ENCODE measurements at regions of chr19 and their contacts with region 1.

Region 1: GRCh38 chr19:16247353-16248182 is 49.9 kb downstream of the AP1M1 start:
- DNase-seq: peak; percentile 69 to 99
- H3K4me3 ChIP-seq: no peak overlapping the region
- H3K27ac ChIP-seq: no peak overlapping the region
- H3K4me1 ChIP-seq: no peaks in the 10 kb centered on the region
- H3K27me3 ChIP-seq: no peaks in the 10 kb centered on the region
- CTCF ChIP-seq: peak; percentile 97 to 98 (median 98)
- EP300 ChIP-seq: no peak
- POLR2A ChIP-seq: no peak
- RAD21 ChIP-seq: peak; percentile 98 to 99

Region 2: DNA sequence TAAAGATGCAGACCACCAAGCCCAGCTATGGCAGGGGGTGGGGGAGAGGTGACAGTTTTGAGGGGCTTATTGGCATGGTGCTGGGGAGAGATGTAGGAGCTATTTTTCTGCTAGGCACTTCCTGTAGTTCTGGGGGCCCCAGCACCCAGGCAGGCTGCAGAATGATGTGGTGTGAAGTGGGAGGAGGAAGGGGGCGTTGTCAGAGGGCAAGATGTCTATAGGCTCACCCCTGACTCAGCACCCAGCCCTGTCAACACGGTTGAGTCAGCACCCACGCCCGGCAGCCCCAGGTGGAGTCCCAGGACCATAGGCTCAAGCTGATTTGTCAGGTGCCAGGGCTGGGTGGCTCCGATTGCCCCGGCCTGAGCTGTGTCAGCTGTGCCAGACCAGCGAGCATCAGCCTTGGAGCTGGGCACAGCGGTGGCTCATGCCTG is 82.8 kb after region 1 on chr19:
- CTCF ChIA-PET with region 1: interaction called, 41 read pairs
- POLR2A ChIA-PET with region 1: no interaction called
- DNase-seq: no peak
- H3K4me3 ChIP-seq: no peak overlapping the region
- H3K27ac ChIP-seq: no peak overlapping the region
- H3K4me1 ChIP-seq: peaks cover 0 to 2% (median 0%) of the 10 kb centered on the region in 4 experiments; a peak in 2 of 7 replicates
- H3K27me3 ChIP-seq: peaks cover 17 to 42% (median 38%) of the 10 kb centered on the region in 4 experiments
- CTCF ChIP-seq: no peak
- EP300 ChIP-seq: no peak
- POLR2A ChIP-seq: no peak
- RAD21 ChIP-seq: no peak

Region 3: DNA sequence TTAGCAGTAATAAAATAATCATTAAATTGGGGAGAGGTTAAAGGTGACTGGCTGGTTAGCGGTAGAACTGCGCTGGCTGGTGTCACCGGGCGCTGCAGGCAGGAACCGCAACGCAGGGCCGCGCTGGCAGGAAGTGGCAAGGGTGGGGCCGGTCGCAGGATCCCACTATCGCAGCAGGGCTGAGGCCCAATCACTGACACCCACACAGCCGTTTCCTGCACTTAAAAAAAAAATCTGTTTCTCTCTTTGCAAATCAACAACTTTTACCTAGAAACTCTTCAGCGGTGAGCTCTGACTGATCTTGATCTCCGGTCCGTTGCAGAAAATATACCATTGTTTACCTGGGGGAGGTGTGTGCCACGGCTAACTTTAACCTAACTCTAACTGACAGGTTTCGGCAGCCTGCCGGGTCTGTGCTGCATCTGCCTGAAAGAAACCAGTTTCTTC is 124.0 kb after region 1 on chr19:
- CTCF ChIA-PET with region 1: interaction called, 38 read pairs
- POLR2A ChIA-PET with region 1: no interaction called
- DNase-seq: no peak
- H3K4me3 ChIP-seq: no peak overlapping the region
- H3K27ac ChIP-seq: no peak overlapping the region
- H3K4me1 ChIP-seq: peaks cover 0 to 4% (median 2%) of the 10 kb centered on the region in 4 experiments; a peak in 2 of 7 replicates
- H3K27me3 ChIP-seq: no peaks in the 10 kb centered on the region
- CTCF ChIP-seq: no peak
- EP300 ChIP-seq: no peak
- POLR2A ChIP-seq: no peak
- RAD21 ChIP-seq: no peak

Region 4: GRCh38 chr19:16376649-16377048 is 129.1 kb after region 1 on chr19:
- CTCF ChIA-PET with region 1: interaction called, 66 read pairs
- POLR2A ChIA-PET with region 1: no interaction called
- DNase-seq: peak in 1 of 2 experiments; percentile 86
- H3K4me3 ChIP-seq: no peak overlapping the region
- H3K27ac ChIP-seq: no peak overlapping the region
- H3K4me1 ChIP-seq: no peaks in the 10 kb centered on the region
- H3K27me3 ChIP-seq: no peaks in the 10 kb centered on the region
- CTCF ChIP-seq: peak; percentile 70 to 89 (median 79)
- EP300 ChIP-seq: no peak
- POLR2A ChIP-seq: no peak
- RAD21 ChIP-seq: peak; percentile 41 to 52

Region 5: DNA sequence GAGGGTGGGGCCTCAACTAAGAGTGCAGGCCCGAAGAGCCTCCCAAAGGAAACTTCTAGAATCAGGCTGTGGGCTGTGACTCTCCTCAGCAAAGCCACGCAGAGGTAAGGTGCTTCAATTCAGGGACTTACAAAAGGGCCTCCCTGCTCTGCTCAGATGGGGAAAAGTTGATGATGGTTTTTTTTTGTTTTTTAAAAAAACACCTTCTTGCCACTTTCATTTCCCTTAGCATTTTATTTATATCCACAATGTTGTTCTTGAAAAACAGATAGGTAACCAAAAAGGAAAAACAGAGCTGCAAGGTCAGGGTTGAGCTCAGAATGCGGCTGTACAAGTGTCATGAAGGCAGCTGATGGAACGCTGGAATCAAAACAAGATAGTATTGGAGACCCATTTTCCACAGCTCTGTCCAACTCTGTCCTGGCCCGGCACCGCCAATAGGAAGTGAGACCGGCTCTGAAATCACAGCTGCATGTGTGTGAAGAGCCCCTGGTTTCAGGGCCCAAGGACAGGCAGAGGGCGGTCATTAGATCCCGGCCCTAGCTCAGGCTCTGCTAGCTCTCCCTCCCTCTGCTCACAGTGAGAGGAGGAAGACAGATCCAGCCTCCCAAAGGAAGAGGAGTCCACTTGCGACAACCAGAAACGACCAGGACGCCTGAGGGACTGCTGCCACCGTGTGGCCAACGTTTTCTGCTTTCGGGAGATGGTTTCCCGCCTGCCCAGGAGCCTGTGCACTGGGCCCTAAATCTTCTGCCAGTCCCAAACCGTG is 135.4 kb after region 1 on chr19:
- CTCF ChIA-PET with region 1: interaction called, 66 read pairs
- POLR2A ChIA-PET with region 1: no interaction called
- DNase-seq: peak; percentile 61 to 91
- H3K4me3 ChIP-seq: no peak overlapping the region
- H3K27ac ChIP-seq: no peak overlapping the region
- H3K4me1 ChIP-seq: no peaks in the 10 kb centered on the region
- H3K27me3 ChIP-seq: no peaks in the 10 kb centered on the region
- CTCF ChIP-seq: peak; percentile 87 to 93 (median 92)
- EP300 ChIP-seq: no peak
- POLR2A ChIP-seq: no peak
- RAD21 ChIP-seq: peak; percentile 97

Region 6: DNA sequence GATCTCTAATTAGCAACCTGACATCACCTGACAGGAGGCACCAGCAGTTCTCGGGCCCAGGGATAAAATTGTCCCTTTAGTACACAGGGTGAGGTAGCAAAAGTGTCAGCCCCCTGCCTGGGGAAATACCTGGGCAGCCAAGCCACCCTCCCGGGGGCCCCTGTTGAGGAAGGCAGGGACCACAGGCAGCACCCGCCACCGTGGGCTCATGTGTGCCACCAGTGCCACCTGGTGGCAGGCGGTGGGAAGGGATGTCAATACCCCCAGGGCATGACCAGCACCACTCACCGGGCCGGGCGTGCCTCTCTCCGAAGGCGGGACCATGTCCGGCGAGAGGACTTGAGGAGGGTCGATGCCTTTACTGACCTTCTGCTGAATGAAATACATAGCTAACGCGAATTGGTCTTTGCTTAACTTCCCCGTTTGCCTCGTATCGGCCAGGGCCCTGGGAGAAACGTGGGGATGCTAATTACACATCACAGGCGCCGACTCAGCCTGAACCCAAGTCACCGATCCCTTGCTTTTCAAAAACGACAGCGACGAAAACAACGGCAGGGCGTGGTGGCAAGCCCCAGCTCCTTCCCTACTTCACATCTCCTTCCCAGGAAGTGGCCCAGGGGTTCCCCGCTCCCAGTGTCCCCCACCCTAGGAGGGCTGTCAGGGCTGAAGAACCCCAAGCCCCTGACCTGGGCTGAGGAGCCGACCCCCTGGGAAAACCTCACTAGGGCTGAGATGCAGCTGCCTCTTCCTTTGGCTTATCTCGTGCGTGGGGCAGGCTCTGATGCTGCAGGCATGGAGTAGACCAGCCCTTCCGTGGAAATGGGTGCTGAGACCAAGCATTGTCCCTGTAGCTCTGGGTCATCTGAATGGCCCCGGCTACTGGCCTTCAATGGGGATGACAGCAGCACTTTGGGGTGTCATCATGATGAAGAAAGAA is 170.4 kb after region 1 on chr19:
- CTCF ChIA-PET with region 1: interaction called, 15 read pairs
- POLR2A ChIA-PET with region 1: no interaction called
- DNase-seq: peak; percentile 72 to 90
- H3K4me3 ChIP-seq: no peak overlapping the region
- H3K27ac ChIP-seq: no peak overlapping the region
- H3K4me1 ChIP-seq: peaks cover 0 to 6% (median 0%) of the 10 kb centered on the region in 4 experiments; a peak in 2 of 7 replicates
- H3K27me3 ChIP-seq: no peaks in the 10 kb centered on the region; a peak in 1 of 7 replicates
- CTCF ChIP-seq: peak; percentile 87 to 97 (median 92)
- EP300 ChIP-seq: no peak
- POLR2A ChIP-seq: no peak
- RAD21 ChIP-seq: peak; percentile 66 to 75

Measured in H1 (cell line).